GM13977 (cell line): ENCODE measurements at regions of chr20 and their contacts with region 1.

Region 1: DNA sequence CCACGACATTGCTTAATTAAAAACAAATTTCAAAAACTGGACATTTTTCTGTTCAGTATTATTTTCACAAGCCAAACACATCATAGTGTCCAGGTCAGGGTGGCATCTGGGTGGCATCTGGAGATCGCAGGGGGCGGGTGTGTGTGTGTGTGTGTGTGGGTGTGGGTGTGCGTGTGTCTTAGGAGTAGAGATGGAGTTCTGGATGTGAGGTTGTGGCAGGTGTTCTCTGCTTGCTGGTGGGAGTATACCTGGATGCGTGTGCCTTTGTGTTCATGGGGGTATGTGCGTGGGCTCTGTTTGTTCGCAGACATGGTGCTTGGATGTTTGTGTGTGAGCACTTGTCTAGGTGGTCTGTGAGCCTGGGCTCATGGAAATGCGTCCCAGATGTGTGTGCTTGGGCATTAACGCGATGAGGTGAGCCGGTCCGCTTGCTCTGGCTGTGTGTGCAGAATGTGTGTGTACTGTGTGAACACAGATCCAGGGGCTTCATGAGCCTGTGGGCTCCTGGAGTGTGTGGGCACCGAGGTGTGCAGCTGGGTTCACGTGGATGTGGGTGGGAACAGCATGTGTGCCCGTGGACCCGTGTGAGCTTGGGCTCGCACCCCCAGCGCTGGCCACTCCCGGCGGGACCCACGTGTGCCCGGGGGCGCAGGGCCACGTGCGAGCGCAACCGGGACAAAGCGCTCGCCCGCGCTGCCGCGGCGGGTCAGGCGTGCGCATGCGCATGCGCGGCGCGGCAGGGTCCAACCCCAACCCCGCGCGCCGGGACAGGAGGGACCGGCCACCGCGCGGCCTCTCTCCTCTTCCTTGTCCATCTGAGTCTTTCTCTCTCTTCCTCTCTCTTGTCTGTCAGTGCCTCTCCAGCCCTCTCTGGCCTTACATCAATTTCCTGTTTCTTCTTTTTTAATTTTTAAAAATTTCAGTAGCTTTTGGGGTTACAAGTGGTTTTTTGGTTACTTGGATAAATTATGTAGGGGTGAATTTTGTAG is 60.4 kb downstream of the SRC start:
- DNase-seq: peak; percentile 87
- CTCF ChIP-seq: no peak

Region 2: DNA sequence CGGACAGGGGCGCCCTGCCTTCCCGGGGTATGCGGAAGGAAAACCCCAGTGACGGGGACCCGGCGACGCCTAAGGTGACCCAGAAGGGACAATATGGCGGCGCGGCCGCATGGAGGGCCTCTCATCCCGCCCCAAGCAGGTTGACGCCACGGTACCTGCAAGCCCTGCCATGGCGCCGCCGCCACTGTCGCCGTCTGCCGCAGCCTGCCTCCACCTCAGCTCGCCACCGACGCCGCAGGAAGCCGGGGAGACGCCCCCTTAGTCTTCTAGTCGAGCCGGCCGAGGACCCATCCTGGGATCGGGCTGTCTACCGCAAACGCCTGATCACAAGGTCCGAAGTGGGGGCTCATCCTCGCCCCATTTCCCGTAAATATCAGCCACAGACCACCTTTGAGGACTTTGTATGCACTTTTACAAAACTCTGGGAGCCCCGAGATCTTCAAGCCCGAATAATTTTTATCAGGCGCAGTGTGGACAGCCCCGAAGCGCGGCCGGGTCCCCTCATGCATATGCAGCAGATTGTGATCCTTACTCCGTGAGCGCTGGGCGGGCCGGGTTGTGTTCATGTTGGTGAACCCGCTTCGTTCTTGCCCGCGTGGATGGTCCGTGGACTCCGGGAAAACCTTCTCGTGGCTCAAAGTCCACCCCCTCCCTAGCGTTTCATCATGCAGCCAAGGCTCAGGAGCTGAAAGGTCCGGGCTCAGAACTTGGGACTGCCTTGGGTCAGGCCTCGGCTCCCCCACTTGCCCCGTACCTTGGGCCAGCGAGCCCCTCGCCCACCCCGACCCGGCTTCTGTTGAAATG is 121.5 kb after region 1 on chr20 and contains the start of gene BLCAP:
- in situ Hi-C with region 1: loop called (anchors 10 kb)
- DNase-seq: peak; percentile 95
- CTCF ChIP-seq: no peak

Region 3: GRCh38 chr20:37657924-37658804 is 251.9 kb after region 1 on chr20:
- in situ Hi-C with region 1: no loop called
- DNase-seq: no peak
- CTCF ChIP-seq: no peak